Transverse colon (tissue), 4 donors: ENCODE measurements at regions of chr15 and their contacts with region 1.

Region 1: GRCh38 chr15:82398785-82399184 is 30.8 kb upstream of the GOLGA6L9 start:
- DNase-seq: no peak
- H3K4me3 ChIP-seq: no peak overlapping the region
- H3K27ac ChIP-seq: no peak overlapping the region
- H3K4me1 ChIP-seq: no peaks in the 10 kb centered on the region
- H3K27me3 ChIP-seq: no peaks in the 10 kb centered on the region
- CTCF ChIP-seq: no peak
- EP300 ChIP-seq: no peak
- POLR2A ChIP-seq: no peak

Region 2: GRCh38 chr15:82139823-82140268 is 258.9 kb before region 1 on chr15:
- in situ Hi-C with region 1: no loop called
- intact Hi-C with region 1: no loop called
- DNase-seq: no peak
- H3K4me3 ChIP-seq: no peak overlapping the region
- H3K27ac ChIP-seq: no peak overlapping the region
- H3K4me1 ChIP-seq: no peaks in the 10 kb centered on the region
- H3K27me3 ChIP-seq: no peaks in the 10 kb centered on the region
- CTCF ChIP-seq: peak; percentile 53 to 67 (median 61)
- EP300 ChIP-seq: no peak
- POLR2A ChIP-seq: no peak

Region 3: GRCh38 chr15:82298520-82298919 is 100.3 kb before region 1 on chr15:
- in situ Hi-C with region 1: loop called in 1 of 4 experiments (anchors 25 kb)
- intact Hi-C with region 1: no loop called
- DNase-seq: peak; percentile 27
- H3K4me3 ChIP-seq: no peak overlapping the region
- H3K27ac ChIP-seq: no peak overlapping the region
- H3K4me1 ChIP-seq: no peaks in the 10 kb centered on the region
- H3K27me3 ChIP-seq: peaks cover 4% of the 10 kb centered on the region
- CTCF ChIP-seq: no peak
- EP300 ChIP-seq: no peak
- POLR2A ChIP-seq: no peak